ENCODE measurements at regions of chr10 and their contacts with region 1.

Region 1: GRCh38 chr10:103069453-103070331 is 123.4 kb downstream of the NT5C2 start:
- DNase-seq: peak; percentile 47 to 84 (median 70)
- ATAC-seq: peak; percentile 86 to 93
- H3K4me3 Mint-ChIP-seq: peak overlapping the region in 6 of 10 donors; percentile 6 to 44 (median 27)
- H3K27ac Mint-ChIP-seq: peak overlapping the region; percentile 8 to 88 (median 60)
- H3K4me1 Mint-ChIP-seq: peaks cover 19 to 36% (median 30%) of the 10 kb centered on the region in 4 donors
- H3K27me3 Mint-ChIP-seq: no peaks in the 10 kb centered on the region

Region 2: DNA sequence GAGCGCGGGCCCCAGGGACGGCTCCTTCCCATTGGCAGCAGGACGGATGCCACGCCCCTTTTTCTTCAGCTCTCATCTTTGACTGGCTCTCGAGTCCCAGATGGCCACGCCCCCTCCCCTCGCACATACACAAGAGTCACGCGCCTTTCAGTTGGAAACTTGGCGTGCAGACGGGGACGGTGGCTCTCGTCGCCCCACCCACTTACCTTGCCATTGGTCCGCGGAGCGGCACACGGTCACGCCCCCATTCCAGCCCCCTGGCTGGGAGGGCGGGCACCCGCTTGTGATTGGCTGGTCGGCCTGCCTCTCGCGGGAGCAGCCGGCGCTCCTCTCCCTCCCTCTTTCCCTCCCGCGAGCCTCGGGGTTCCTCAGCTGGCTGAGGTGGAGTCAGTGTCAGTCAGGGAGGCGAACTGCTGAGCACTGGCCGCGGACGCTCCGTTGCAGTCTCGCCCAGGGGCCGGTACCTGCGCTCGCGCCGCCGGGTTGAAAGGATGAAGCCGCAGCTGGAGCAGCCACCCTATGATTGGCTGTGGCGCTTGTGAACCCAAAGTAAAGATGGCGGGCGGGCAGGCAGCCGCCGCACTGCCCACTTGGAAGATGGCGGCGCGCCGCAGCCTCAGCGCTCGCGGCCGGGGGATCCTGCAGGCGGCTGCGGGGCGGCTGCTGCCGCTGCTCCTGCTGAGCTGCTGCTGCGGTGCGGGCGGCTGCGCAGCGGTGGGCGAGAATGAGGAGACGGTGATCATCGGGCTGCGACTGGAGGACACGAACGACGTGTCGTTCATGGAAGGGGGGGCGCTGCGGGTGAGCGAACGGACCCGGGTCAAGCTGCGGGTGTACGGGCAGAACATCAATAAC is 151.5 kb before region 1 on chr10 and contains the start of gene CNNM2:
- POLR2A ChIA-PET with region 1: interaction called, 28 read pairs
- DNase-seq: peak; percentile 97 to 100 (median 99)
- ATAC-seq: peak; percentile 86 to 89
- H3K4me3 Mint-ChIP-seq: peak within 1 kb of the TSS; percentile 94 to 99 (median 96)
- H3K27ac Mint-ChIP-seq: peak within 1 kb of the TSS; percentile 91 to 98 (median 96)
- H3K4me1 Mint-ChIP-seq: peaks cover 22 to 57% (median 50%) of the 10 kb centered on the region in 4 donors
- H3K27me3 Mint-ChIP-seq: peaks cover 0 to 17% (median 2%) of the 10 kb centered on the region in 5 donors
- polyA plus RNA-seq, gene CNNM2: 4.4 to 5.7 (median 5.3) TPM

Region 3: DNA sequence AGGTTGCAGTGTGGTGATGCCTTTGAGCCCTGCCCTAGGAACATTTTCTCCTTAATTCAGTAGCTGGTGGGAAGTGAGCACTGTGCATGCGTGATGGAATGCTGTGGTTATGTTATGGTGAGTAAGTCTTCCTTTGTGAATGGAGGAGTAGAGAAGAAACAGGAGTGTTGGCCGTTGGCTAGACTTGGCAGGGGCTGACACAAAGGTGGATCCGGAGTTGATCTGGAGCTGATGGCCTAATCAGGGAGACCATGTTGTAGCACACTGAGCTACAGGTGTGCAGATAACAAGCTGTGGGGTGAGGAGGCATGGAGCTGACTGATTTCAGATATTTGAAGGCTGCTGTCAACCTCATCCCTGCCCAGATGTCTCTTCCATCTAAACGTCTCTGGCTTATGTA is 29.3 kb before region 1 on chr10:
- POLR2A ChIA-PET with region 1: no interaction called
- DNase-seq: no peak
- ATAC-seq: no peak
- H3K4me3 Mint-ChIP-seq: no peak overlapping the region
- H3K27ac Mint-ChIP-seq: peak overlapping the region in 1 of 10 donors; percentile 30
- H3K4me1 Mint-ChIP-seq: peaks cover 0 to 3% (median 0%) of the 10 kb centered on the region in 4 donors
- H3K27me3 Mint-ChIP-seq: no peaks in the 10 kb centered on the region

Measured in naive thymus-derived CD8-positive, alpha-beta T cell (primary cell).